ENCODE measurements at regions of chrX and their contacts with region 1.

Region 1: DNA sequence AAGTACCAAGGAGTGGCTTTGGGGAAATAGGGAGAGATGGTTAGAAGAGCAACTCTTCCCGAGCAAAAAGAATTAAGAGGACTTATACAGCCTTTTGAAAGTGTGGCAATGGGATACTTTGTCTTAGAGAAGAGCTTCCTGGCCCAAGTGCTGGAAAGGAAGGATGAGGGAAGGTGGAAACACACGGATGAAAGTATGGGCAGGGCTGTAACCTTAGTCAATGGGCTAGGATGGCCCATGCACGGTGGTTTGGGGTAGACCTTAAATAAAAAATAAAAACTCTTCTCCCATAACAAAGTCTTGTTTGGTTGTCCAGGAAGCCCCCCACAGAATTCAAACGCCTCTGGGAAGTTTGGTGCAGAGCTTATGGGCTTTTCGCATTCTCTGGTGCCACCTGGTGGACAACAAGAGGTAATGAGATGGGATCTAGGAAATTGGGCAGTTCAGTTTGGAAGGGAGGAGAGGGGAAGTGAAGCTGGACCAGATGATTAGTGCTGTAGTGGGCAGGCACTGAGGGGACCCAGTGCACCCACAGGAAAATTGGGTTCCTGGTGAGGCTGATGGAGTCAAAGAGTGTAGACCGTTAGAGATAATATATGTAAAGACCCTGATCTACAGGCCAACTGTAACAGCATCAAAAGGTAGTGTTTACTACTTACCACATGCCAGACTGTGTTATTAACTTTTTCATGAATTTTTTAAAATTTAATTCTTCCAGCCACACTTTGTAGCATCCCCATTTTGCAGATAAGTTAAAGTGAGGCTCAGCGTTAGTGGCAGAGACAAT is 13.8 kb upstream of the ENOX2 start:
- DNase-seq: peak; percentile 42
- H3K4me3 Mint-ChIP-seq: no peak overlapping the region
- H3K27ac Mint-ChIP-seq: no peak overlapping the region
- H3K4me1 Mint-ChIP-seq: no peaks in the 10 kb centered on the region
- H3K27me3 Mint-ChIP-seq: peaks cover 26% of the 10 kb centered on the region
- CTCF ChIP-seq: peak; percentile 72

Region 2: GRCh38 chrX:130330706-130331105 is 586.1 kb before region 1 on chrX:
- CTCF ChIA-PET with region 1: interaction called, 4 read pairs
- intact Hi-C with region 1: loop called (anchors 5 kb)
- DNase-seq: peak; percentile 61
- H3K4me3 Mint-ChIP-seq: no peak overlapping the region
- H3K27ac Mint-ChIP-seq: no peak overlapping the region
- H3K4me1 Mint-ChIP-seq: no peaks in the 10 kb centered on the region
- H3K27me3 Mint-ChIP-seq: peaks cover 15% of the 10 kb centered on the region
- CTCF ChIP-seq: peak; percentile 27

Region 3: DNA sequence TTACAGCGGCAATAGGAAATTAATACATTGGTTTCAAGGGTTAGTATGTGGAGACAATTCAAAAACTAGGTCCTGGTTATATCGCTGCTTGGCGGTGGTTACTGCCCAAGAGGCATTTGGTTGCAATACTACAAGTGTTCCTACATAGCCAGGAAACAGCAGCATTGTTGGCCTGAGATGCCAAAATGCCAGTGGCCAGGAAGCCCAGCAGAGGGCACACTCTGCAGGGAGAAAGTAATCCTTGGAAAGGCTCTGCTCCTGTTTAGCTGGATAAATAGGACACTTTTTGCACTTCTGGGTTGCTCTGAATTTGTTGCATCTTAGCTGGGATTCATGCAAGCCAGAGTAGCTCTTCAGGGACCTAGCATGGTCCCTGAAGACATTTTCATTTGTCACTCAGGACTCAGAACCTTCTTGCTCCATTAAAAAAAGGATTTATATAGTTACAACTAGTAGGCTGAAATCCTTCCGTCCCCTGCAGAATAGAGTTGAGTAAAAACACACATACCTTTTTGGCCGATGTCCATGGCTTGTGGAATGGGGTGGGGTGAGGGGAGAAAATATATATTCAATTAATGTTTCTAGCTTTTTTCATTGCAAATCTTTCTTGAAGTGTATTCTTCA is 523.3 kb before region 1 on chrX:
- CTCF ChIA-PET with region 1: interaction called, 26 read pairs
- intact Hi-C with region 1: loop called (anchors 1 kb)
- DNase-seq: peak; percentile 51
- H3K4me3 Mint-ChIP-seq: no peak overlapping the region
- H3K27ac Mint-ChIP-seq: no peak overlapping the region
- H3K4me1 Mint-ChIP-seq: no peaks in the 10 kb centered on the region
- H3K27me3 Mint-ChIP-seq: peaks cover 57% of the 10 kb centered on the region
- CTCF ChIP-seq: peak; percentile 45